Body of pancreas (tissue), 4 donors: ENCODE measurements at regions of chr16 and their contacts with region 1.

Region 1: GRCh38 chr16:85717393-85718121 is 28.8 kb upstream of the GINS2 start:
- DNase-seq: peak; percentile 78 to 80 (median 78)
- ATAC-seq: peak; percentile 65
- H3K4me3 ChIP-seq: no peak overlapping the region
- H3K27ac ChIP-seq: no peak overlapping the region
- H3K4me1 ChIP-seq: no peaks in the 10 kb centered on the region
- H3K27me3 ChIP-seq: no peaks in the 10 kb centered on the region
- CTCF ChIP-seq: peak; percentile 61 to 82 (median 72)
- POLR2A ChIP-seq: no peak

Region 2: GRCh38 chr16:85275533-85276249 is 441.9 kb before region 1 on chr16:
- intact Hi-C with region 1: loop called (anchors 10 kb)
- DNase-seq: peak; percentile 47 to 74 (median 70)
- ATAC-seq: peak; percentile 75
- H3K4me3 ChIP-seq: no peak overlapping the region
- H3K27ac ChIP-seq: no peak overlapping the region
- H3K4me1 ChIP-seq: no peaks in the 10 kb centered on the region
- H3K27me3 ChIP-seq: no peaks in the 10 kb centered on the region
- CTCF ChIP-seq: peak; percentile 78 to 88 (median 83)
- POLR2A ChIP-seq: no peak

Region 3: DNA sequence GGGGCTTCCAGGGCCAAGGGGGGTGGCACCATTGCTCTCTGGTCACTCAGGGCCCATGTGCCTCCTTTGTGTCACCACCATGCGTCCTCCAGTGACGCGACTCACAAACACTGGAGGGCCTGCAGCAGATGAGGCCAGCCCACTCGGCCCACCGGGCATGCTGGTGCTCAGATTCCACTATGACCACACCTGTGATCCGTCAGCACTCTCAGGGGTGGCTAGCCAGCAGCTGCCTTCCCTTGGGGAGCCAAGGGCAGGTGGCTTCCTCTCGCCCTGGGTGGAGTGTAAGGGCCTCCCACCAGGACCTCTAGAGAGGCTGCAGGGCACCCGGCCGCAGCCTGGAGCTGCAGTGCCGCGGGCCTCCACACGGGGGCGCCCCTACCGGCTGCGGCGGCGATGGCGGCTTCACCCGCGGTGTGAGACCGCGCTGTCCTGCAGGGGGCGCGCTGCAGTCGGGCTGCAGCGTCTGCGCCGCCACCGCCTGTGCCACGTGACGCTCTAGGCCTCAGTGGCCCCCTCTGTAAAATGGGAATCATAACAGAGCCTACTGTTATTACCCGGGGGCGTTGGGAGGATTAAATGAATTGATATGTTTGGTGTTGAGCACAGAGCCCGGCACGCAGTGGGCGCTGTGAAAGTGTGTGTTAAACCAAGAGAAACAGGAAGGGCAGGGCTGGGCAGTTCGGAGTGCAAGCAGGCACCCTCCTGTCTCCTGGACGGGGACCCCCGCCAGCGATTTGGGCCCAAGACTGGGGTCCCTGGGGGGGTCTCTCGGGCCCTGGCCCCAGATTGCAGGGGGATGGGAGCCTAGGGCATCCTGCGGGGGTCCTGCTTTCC is 296.8 kb before region 1 on chr16:
- intact Hi-C with region 1: loop called (anchors 10 kb)
- DNase-seq: peak; percentile 59 to 76 (median 68)
- ATAC-seq: peak; percentile 40
- H3K4me3 ChIP-seq: no peak overlapping the region
- H3K27ac ChIP-seq: no peak overlapping the region
- H3K4me1 ChIP-seq: peaks cover 53% of the 10 kb centered on the region
- H3K27me3 ChIP-seq: no peaks in the 10 kb centered on the region
- CTCF ChIP-seq: peak; percentile 92 to 100 (median 100)
- POLR2A ChIP-seq: no peak

Region 4: DNA sequence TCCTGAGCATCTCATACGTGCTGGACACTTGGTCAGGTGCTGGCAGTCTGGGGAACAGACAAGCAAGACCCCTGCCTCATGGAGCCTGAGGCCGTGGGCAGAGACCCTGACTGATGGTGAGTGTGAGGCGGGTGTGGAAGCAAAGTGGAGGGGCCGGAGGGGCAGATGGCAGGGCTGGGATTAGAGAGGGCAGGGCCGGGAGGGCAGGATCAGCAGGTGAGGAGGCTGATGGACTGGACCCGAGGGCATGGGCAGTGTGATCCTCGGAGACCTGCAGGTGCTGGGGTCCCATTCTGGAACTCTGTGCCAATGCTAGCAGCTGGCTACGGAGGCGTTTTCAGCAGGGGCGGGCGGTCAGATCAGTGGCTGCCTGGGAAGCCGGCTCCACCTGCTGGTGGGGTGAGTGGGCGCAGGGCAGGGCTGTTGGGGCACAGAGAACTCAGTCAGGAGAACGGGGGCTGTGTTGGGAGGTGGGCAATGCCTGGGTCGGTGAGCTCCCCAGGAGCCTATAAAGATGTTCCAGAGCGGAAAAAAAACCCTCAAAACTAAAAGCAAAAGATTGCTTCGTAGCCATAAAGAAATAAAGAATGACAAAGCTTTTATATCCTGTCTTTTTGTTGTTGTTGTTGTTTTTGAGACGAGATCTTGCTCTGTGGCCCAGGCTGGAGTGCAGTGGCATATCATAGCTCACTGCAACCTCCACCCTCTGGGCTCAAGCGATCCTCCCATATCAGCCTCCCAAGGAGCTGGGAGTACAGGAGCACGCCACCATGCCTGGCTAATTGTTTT is 42.3 kb after region 1 on chr16:
- intact Hi-C with region 1: no loop called
- DNase-seq: peak; percentile 49 to 72 (median 54)
- ATAC-seq: peak; percentile 42
- H3K4me3 ChIP-seq: no peak overlapping the region
- H3K27ac ChIP-seq: no peak overlapping the region
- H3K4me1 ChIP-seq: peaks cover 9% of the 10 kb centered on the region
- H3K27me3 ChIP-seq: no peaks in the 10 kb centered on the region
- CTCF ChIP-seq: peak in 6 of 7 experiments; percentile 35 to 62 (median 49)
- POLR2A ChIP-seq: no peak